GM18951 (cell line): ENCODE measurements at regions of chr17 and their contacts with region 1.

Region 1: GRCh38 chr17:76940738-76941350 is 72.6 kb downstream of the MGAT5B start:
- POLR2A ChIP-seq: no peak

Region 2: DNA sequence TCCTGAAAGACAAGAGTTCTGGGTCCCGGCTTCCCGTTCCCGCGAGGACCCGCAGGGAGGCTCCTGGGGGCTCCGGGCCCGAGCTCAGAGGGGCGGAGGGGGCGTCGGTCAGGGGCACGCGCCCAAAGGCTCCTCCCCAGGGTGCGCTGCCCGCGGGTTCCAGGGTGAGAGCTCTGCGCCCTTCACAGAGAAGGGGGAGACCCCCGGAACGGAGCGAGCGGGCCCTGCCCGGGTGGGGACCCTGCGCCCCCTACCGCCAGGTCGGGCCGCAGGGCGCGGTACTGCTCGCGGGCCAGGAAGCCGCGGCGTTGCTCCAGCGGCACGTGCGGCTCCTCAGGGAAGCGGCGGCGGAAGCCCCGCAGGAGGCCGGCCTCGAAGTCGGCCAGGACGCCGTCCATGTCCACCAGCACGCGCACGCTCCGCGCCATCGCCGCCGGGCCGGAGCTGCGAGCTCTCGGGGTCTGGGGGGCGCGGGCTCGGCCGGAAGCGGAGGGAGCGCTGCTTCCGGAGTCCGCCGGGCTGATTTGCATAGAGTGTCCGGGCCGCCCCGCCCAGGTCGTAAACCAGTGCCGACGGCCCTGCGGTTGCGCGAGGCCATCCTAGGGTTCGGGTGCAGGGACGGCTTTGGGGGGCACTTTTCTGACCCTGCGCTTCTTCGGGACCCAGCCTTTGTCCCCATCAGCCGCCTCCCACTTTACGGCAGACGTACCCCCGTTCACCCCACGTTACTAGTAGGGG is 1809.4 kb before region 1 on chr17 and contains the start of gene NT5C:
- in situ Hi-C with region 1: loop called (anchors 25 kb)
- POLR2A ChIP-seq: peak; percentile 97

Region 3: DNA sequence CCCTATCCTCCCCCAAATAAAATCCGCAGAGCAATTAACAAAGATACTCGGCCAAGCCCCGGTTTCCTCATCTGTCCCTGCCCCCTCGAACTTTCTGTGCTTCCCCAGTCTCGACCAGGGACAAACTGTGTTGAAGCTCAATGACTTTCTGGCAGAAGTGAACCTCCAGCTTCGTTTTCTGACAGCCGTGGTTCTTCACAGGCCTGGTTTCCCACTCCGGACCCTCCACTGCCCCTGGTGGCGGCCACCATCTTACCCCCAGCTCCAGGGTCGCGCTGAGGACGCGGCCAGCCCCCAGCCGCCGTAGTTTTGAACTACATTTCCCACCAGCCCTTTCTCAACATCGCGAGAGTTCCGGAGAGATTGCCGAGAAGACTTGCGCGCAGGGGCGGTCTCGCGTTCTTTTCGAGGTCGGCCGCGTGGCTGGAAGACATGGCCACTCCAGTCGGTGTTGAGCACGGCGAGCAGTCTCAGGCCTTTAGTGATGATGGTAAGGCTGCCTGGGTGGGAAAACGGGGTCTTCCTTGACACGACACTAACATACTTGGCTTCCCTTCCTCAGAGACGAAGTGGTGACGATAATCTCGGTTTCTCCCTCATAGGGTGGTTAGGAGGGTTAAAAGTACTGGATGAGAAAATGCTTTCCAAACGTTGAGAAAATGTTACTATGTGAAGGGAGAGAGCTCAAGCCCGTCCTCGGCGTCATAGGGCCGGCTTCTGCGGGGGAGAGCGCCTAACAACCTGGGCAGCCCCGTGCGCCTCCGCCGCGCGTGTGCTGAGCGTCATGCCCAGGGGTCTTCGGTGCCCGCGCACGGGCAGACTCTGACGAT is 383.3 kb before region 1 on chr17:
- in situ Hi-C with region 1: no loop called
- POLR2A ChIP-seq: peak; percentile 93

Region 4: GRCh38 chr17:77049440-77049839 is 108.6 kb after region 1 on chr17:
- in situ Hi-C with region 1: no loop called
- POLR2A ChIP-seq: no peak